Activated CD8-positive, alpha-beta T cell treated with anti-CD3 and anti-CD28 coated beads, Interleukin-2, amount 10 ng/mL, durations not matched to agents 7 days and 5 days (primary cell): ENCODE measurements at regions of chr20 and their contacts with region 1.

Region 1: GRCh38 chr20:31661625-31662371 is 24.1 kb downstream of the COX4I2 start:
- DNase-seq: peak; percentile 83
- ATAC-seq: peak; percentile 85
- H3K4me3 Mint-ChIP-seq: peak overlapping the region; percentile 75
- H3K27ac Mint-ChIP-seq: peak overlapping the region; percentile 90
- H3K4me1 Mint-ChIP-seq: peaks cover 59% of the 10 kb centered on the region
- H3K27me3 Mint-ChIP-seq: no peaks in the 10 kb centered on the region

Region 2: GRCh38 chr20:31560094-31560899 is 101.5 kb before region 1 on chr20:
- CTCF ChIA-PET with region 1: interaction called, 11 read pairs
- POLR2A ChIA-PET with region 1: no interaction called
- DNase-seq: peak; percentile 85
- ATAC-seq: peak; percentile 71
- H3K4me3 Mint-ChIP-seq: no peak overlapping the region
- H3K27ac Mint-ChIP-seq: peak overlapping the region; percentile 78
- H3K4me1 Mint-ChIP-seq: peaks cover 24% of the 10 kb centered on the region
- H3K27me3 Mint-ChIP-seq: no peaks in the 10 kb centered on the region

Region 3: GRCh38 chr20:31644701-31645100 is 17.1 kb before region 1 on chr20:
- CTCF ChIA-PET with region 1: interaction called, 16 read pairs
- POLR2A ChIA-PET with region 1: no interaction called
- DNase-seq: no peak
- ATAC-seq: no peak
- H3K4me3 Mint-ChIP-seq: no peak overlapping the region
- H3K27ac Mint-ChIP-seq: no peak overlapping the region
- H3K4me1 Mint-ChIP-seq: peaks cover 43% of the 10 kb centered on the region
- H3K27me3 Mint-ChIP-seq: peaks cover 48% of the 10 kb centered on the region

Region 4: GRCh38 chr20:31684153-31685015 is 22.6 kb after region 1 on chr20:
- CTCF ChIA-PET with region 1: interaction called, 95 read pairs
- POLR2A ChIA-PET with region 1: interaction called, 12 read pairs
- DNase-seq: no peak
- ATAC-seq: peak; percentile 67
- H3K4me3 Mint-ChIP-seq: no peak overlapping the region
- H3K27ac Mint-ChIP-seq: peak overlapping the region; percentile 85
- H3K4me1 Mint-ChIP-seq: peaks cover 82% of the 10 kb centered on the region
- H3K27me3 Mint-ChIP-seq: no peaks in the 10 kb centered on the region

Region 5: DNA sequence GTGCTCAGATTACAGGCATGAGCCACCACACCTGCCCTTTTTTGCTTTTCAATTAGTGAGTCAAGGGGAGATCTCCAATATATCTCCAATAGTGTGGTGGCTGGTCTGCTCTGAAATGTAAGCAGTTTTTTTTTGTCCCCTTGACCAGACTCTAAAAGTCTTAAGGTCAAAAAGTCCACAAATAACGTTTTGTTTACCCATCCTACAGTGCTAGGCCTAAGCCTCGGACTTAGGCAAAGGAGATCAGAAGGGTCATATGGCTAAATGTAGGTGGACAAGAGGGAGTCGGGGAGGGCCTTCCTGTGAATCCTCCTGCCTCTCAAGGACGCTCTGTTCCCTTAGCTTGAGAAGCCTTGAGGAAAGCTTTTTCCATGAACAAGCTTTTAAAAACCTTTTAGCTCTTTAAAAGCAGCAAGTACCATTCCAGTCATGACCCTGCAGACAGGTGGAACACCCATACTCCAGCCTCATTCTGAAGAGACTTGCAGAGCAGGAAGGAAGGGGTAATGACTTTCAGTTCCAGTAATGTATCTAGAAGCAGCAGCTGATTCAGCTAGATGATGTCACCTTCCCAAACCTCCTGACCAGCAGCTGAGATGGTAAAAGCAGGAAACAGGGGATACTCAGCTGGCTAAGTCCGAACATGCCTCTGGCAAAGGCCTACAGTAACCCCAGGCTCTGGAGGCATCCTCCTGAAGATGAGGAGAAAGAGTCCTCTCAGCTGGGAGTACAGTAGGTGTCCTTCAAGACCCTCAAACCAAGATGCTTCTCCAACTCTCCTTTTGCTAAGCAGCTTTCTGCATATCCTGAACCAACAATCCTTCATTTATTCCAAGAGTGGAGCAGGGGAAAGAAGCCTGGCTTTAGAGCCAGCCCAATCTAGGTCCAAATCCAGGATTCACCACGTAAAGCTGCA is 37.3 kb after region 1 on chr20:
- CTCF ChIA-PET with region 1: interaction called, 80 read pairs
- POLR2A ChIA-PET with region 1: interaction called, 3 read pairs
- DNase-seq: peak; percentile 45
- ATAC-seq: peak; percentile 76
- H3K4me3 Mint-ChIP-seq: peak overlapping the region; percentile 27
- H3K27ac Mint-ChIP-seq: peak overlapping the region; percentile 84
- H3K4me1 Mint-ChIP-seq: peaks cover 65% of the 10 kb centered on the region
- H3K27me3 Mint-ChIP-seq: no peaks in the 10 kb centered on the region

Region 6: DNA sequence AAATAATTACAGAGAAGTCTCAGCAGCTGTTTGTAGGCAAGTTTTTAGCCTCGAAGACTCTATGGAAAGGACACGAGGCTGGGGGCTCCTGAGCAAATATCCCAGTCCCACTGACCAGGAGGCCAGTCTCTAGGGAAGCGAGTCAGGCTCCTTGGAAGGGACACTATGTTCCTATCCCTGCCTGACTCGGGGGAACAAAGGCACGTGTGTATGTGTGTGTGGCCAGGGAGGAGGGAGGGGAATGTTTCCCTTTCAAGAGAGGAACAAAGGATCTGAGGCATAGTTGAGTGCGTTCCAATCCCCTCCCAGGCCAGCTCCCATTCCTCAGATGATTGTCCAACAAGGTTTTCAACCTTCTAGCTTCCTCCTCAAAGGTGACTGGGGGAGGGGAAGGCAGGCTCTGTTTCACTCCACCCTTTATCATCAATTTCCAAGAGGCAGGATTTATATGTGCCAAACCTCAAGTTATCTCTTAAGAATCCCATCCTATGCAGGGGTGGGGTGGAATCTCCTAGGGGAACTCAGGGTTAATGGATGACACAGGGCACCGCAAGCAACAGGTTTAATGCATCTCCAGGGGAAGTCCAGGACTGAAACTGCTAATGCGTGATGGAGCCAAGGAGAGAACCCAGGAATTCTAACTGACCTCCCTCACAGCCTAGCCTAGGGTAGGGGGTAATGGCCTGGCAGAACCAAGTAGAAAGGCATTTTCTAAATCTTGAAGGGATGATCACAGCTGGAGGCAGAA is 50.9 kb after region 1 on chr20:
- CTCF ChIA-PET with region 1: interaction called, 677 read pairs
- POLR2A ChIA-PET with region 1: interaction called, 5 read pairs
- DNase-seq: no peak
- ATAC-seq: no peak
- H3K4me3 Mint-ChIP-seq: no peak overlapping the region
- H3K27ac Mint-ChIP-seq: peak overlapping the region; percentile 50
- H3K4me1 Mint-ChIP-seq: peaks cover 90% of the 10 kb centered on the region
- H3K27me3 Mint-ChIP-seq: no peaks in the 10 kb centered on the region

Region 7: DNA sequence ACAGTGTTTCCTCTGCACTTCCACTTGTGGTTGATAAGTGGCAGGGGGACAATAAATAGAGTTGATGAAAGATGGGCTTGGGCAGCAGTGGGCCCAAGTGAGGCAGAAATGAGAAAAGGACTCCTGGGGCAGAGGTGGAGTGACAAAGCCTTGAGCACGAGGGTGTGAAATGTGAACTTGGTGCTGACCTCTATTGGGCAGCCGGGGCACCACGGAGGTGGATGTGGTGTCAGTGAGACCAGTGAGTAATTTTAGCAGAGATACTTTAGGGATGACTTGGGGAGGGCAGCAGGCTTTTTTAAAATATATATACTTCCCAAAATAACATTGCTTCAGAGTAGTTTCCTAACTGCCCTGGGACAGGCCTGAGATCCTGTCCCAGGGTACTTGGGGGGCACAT is 126.8 kb after region 1 on chr20:
- CTCF ChIA-PET with region 1: no interaction called
- POLR2A ChIA-PET with region 1: no interaction called
- DNase-seq: no peak
- ATAC-seq: no peak
- H3K4me3 Mint-ChIP-seq: no peak overlapping the region
- H3K27ac Mint-ChIP-seq: no peak overlapping the region
- H3K4me1 Mint-ChIP-seq: peaks cover 1% of the 10 kb centered on the region
- H3K27me3 Mint-ChIP-seq: no peaks in the 10 kb centered on the region